ENCODE measurements at regions of chr9 and their contacts with region 1.

Region 1: DNA sequence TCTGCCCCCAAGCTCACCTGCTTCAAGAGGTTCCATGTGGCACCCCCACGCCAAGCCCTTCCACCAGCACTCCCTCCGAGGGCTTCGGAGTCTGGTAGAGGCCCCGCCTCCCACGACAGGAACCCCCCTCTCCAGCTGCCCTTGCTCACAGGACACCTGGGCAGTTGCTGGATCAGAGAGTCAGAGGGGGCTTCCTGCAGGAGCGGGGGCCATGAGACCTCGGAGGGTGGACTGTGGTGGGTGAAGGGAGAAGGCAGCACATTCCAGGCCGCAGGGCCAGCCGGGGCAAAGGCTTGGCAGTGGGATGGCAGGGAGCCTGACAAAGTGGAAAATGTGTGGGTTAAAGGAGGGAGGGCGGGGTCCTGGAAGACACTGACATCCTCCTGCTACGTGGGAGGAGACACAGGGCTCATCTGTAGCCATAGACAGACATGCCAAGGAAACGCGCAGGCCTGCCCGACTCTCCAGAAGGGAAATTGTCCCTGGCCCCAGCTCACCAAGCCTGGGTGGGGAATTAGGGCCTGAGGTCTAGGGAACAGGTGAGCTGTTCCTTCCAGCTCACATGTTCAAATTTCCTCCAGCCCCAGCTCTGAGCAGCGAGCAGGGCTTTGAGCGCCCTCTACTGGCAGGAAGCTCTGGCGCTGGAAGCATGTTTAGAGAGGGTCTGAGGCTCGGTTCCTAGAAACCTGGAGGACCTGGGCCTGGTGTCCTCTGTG is 74.2 kb downstream of the NTNG2 start:
- DNase-seq: peak; percentile 84 to 89 (median 85)
- ATAC-seq: peak; percentile 28
- H3K4me3 ChIP-seq: no peak overlapping the region
- H3K27ac ChIP-seq: no peak overlapping the region
- H3K4me1 ChIP-seq: peaks cover 15% of the 10 kb centered on the region
- H3K27me3 ChIP-seq: no peaks in the 10 kb centered on the region
- CTCF ChIP-seq: peak; percentile 88 to 97 (median 93)
- POLR2A ChIP-seq: no peak

Region 2: DNA sequence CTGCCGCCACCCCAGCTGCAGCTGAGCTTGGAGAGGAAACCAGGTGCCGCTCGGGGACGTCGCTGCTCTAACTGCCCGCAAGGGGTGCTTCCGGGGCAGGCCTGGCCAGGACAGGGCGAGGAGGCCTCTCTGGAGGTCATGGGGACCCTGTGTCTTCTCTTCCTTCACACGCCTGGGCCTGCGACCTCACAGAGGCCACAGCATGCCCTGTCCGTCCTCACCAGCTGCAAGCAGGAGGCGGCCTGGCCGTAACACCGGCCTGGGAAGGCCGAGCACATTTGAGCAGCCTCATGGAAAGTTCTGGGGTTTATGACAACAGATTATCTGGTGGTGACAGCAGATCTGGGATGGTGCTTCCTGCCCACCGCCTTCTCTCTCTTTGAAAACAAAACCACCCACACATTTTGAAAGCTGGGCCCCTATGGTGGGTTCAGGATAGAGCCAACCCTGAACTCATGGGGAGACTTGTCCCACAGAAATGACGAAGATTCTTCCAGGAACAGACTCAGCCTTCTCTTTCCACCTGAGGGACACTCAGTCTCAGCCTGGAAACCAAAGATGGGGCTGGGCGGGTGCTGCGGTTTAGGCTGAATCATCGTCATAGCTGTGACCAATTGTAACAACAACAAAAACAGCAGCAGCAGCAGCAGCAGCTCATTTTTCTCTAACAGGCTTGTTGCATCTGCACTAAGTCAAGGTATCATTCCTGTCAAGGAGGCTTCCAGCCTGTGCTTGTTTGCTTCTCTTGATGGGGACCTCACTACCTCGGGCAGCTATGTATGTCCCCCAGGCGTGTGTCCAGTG is 396.6 kb before region 1 on chr9:
- intact Hi-C with region 1: loop called (anchors 10 kb)
- DNase-seq: no peak
- ATAC-seq: no peak
- H3K4me3 ChIP-seq: no peak overlapping the region
- H3K27ac ChIP-seq: no peak overlapping the region
- H3K4me1 ChIP-seq: no peaks in the 10 kb centered on the region
- H3K27me3 ChIP-seq: no peaks in the 10 kb centered on the region
- CTCF ChIP-seq: no peak
- POLR2A ChIP-seq: no peak

Region 3: DNA sequence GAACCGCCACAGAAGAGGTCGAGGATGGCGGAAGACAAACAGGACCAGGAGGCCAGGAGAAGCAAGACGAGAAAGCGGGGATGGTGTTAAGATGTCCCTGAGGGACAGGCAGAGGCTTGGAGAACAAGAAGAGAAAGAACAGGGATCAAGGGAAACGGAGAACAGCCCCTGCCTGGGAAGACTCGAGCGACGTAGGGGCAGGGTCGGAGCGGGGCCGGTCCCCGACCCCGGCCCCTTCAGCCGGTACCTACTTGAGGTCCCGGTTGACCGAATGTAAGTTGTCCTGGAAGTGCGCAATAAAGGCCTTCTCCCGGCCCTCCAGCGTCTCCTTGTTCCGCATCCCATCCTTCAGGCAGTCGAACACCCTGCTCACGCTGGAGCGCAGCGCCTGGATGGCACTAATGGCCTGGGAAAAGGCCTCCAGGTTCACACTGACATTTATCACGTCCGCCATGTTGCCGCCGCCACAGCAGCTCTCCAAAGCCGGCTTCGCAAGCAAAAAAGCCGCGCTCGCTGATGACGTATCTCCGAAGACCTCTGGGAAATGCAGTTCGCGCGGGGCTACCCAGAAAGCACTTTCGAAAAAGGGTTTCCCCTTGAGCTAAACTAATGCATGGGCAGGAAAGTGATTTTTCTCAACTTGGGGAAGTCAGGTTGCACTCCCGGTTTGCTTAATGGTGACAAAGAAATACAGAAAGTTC is 156.6 kb before region 1 on chr9 and contains the start of gene MED27:
- intact Hi-C with region 1: loop called (anchors 10 kb)
- DNase-seq: peak; percentile 90 to 96 (median 93)
- ATAC-seq: peak; percentile 97
- H3K4me3 ChIP-seq: peak within 1 kb of the TSS; percentile 51 to 66
- H3K27ac ChIP-seq: peak within 1 kb of the TSS in 3 of 4 donors; percentile 57 to 62 (median 58)
- H3K4me1 ChIP-seq: peaks cover 14% of the 10 kb centered on the region
- H3K27me3 ChIP-seq: no peaks in the 10 kb centered on the region
- CTCF ChIP-seq: peak in 1 of 7 experiments; percentile 9
- POLR2A ChIP-seq: peak in 2 of 3 donors; percentile 61 to 65
- total RNA-seq, gene MED27: 3.4 to 11.5 TPM

Region 4: DNA sequence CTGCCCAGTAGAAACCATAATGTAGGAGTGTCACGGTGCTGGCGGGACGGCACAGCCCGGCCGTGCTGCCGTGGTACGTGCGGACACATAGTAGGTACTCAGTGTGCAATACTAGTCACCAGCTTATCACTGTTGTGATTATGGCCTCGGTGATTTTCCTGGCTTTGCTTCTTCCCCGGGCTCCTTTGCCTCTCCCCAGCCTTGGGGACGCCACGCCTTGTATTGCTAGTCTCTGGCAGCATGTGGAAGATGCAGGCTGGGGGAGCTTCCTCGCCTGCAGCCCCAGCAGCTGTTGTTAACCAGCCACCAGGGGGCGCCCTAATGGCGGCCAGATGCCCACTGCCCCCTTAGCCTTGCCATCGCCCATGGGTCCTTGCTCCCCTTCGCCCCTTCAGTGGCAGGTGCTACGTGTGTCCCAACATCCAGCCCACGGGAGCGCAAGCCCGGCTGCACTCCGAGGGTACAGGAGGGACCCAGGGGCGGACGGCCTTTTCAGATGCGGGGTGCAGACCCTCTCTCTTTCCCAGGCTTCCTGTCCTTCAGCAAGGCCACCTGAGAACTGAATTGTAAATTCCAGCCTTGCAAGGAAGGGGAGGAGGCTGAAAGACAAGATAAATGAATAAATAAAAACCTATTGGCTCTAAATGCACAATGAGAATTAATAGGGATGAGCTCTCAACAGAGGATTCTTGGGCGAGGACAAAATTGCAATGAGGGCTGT is 66.3 kb before region 1 on chr9:
- intact Hi-C with region 1: loop called (anchors 5 kb)
- DNase-seq: peak; percentile 57 to 67 (median 60)
- ATAC-seq: peak; percentile 47
- H3K4me3 ChIP-seq: no peak overlapping the region
- H3K27ac ChIP-seq: no peak overlapping the region
- H3K4me1 ChIP-seq: peaks cover 21% of the 10 kb centered on the region
- H3K27me3 ChIP-seq: no peaks in the 10 kb centered on the region
- CTCF ChIP-seq: peak; percentile 57 to 81 (median 68)
- POLR2A ChIP-seq: no peak

Measured in body of pancreas (tissue), 4 donors.